ENCODE measurements at regions of chr7 and their contacts with region 1.

Region 1: DNA sequence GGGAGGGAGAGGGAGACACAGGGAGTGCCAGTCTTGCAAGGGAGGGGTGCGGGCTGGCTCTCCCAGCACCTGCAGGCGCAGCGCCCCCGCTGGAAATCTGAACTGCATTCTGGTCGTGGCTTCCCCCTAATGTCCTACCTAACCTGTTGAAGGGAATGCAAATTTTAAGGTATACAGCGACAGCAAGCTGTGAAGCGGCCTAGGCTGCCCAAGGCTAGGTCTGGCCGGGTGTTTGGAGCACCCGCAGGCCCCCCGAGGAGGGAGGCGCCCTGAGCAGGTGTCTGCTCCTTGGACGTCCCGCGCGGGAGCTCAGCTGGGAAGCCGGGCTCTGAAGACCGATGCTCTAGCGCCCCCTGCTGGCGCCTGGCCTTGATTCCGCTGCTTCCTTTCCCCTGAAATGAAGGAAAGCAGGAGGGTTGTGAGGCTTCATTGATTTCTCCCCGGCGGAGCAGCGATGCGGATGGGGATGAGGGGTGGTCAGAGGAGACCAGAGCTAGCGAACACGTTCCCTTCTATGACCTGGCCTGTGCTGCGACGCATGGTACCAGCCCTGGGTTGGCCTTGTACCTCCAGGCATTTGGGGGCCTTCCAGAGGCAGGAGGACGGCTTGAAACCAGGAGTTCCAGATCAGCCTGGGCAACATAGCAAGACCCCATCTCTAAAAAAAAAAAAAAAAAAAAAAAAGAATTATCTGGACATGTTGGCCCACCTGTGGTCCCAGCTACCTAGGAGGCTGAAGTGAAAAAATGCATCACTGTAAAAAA is 601.3 kb downstream of the GALNT17 start:
- DNase-seq: peak; percentile 32
- H3K4me3 Mint-ChIP-seq: no peak overlapping the region
- H3K27ac Mint-ChIP-seq: no peak overlapping the region
- H3K4me1 Mint-ChIP-seq: no peaks in the 10 kb centered on the region
- H3K27me3 Mint-ChIP-seq: no peaks in the 10 kb centered on the region

Region 2: DNA sequence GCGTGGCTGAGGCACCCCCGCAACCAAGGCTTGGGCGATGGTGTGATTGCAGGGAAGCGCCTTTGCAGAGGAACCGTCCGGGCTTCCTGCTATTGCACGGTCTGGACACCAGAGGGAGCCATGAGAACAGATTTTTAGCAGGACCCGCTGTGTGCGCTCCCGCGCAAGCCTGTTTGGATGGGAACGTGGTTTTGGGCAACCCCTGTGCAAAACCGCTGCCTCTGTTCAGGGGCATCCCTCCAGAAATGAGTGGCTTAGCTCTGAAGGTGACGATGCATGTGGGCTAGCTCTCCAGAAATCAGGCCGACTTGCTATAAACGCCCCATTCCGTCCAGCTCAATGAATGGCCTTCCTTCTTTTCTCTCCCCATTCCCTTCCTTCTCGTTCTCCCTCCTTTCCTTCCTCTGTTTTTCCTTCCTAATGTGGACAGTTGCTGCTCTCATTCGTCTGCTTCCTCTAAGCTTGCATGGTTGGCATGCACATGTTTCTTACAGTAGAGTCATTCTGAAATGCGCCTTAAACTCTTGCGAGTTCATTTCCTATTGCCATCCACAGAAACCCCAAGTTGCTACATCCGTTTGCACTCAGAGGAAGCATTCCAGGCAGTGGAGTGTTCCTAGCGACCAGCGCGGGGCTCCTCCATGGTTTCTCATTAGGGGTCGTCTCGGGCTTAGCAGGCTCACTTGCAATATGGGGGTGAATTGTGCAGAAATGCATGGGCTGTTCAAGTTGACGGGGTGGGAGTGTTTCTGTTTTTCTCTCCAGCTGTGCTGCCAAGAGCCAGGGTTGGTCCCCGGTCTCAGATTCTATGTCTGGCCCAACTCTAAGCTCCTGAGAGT is 903.8 kb before region 1 on chr7:
- intact Hi-C with region 1: loop called (anchors 2 kb)
- DNase-seq: peak; percentile 38
- H3K4me3 Mint-ChIP-seq: no peak overlapping the region
- H3K27ac Mint-ChIP-seq: no peak overlapping the region
- H3K4me1 Mint-ChIP-seq: peaks cover 9% of the 10 kb centered on the region
- H3K27me3 Mint-ChIP-seq: no peaks in the 10 kb centered on the region

Region 3: DNA sequence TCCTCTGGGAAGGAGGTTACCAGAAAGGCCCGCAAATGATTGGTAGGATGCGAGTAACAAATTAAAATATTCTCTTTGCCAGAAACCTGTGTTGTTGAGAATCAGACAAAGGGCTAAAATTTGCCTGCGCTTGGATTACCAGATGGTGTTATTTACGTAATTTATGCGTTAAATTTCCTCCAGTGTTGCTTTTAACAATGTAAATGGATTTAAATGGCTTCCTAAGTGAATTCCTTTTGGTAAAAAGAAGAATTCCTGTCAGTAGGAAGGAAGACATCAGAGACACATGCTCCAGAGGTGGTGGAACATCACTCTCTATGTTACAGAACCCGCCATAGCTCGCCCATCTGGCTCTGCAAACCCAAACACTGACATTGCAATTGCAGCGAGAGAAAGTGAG is 80.8 kb before region 1 on chr7:
- intact Hi-C with region 1: no loop called
- DNase-seq: no peak
- H3K4me3 Mint-ChIP-seq: no peak overlapping the region
- H3K27ac Mint-ChIP-seq: no peak overlapping the region
- H3K4me1 Mint-ChIP-seq: no peaks in the 10 kb centered on the region
- H3K27me3 Mint-ChIP-seq: no peaks in the 10 kb centered on the region

Region 4: GRCh38 chr7:71716690-71717089 is 16.6 kb before region 1 on chr7:
- intact Hi-C with region 1: no loop called
- DNase-seq: no peak
- H3K4me3 Mint-ChIP-seq: no peak overlapping the region
- H3K27ac Mint-ChIP-seq: no peak overlapping the region
- H3K4me1 Mint-ChIP-seq: no peaks in the 10 kb centered on the region
- H3K27me3 Mint-ChIP-seq: no peaks in the 10 kb centered on the region